ENCODE measurements at regions of chr21 and their contacts with region 1.

Region 1: GRCh38 chr21:42652527-42653230 is 742 bp upstream of the PDE9A start:
- DNase-seq: no peak
- H3K4me3 ChIP-seq: peak overlapping the region; percentile 68 to 91 (median 74)
- H3K27ac ChIP-seq: peak overlapping the region; percentile 78 to 86 (median 84)
- H3K4me1 ChIP-seq: peaks cover 29 to 58% (median 55%) of the 10 kb centered on the region in 4 donors
- H3K27me3 ChIP-seq: peaks cover 0 to 4% (median 2%) of the 10 kb centered on the region in 4 donors
- CTCF ChIP-seq: peak; percentile 57 to 76 (median 70)
- EP300 ChIP-seq: no peak
- POLR2A ChIP-seq: no peak

Region 2: DNA sequence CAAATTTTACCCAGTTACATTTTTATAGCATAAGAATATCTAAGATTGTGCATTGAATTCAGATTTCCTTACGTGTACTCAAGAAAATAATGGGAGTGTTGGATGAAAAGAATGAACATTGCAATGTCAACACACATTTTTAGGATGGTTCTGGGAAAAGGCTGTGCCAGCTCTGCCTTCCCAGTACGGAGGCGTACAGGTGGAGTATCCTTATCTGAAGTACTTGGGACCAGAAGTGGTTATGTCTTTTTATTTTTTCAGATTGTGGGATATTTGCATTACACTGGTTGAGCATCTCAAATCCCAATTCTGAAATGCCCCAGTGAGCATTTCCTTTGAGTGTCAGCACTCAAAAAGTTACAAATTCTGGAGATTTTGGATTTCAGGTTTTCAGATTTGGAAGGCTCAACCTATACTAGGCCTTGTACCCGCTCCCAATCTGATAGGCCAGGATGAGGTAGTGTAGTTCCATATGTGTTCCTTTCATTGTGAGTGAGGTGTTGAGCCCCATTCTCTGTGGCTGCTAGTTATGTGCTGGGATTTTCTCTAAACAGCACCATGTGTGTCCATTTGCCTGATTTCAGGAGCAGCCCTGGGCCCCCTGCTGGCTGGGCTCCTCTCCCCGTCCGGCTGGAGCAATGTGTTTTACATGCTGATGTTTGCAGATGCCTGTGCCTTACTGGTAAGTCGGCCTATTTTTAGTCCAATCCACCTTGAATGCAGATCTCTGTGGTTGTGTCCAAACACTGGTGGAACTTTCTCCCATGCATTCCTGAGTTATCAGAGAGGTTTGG is 78.2 kb before region 1 on chr21:
- intact Hi-C with region 1: no loop called
- DNase-seq: no peak
- H3K4me3 ChIP-seq: no peak overlapping the region
- H3K27ac ChIP-seq: no peak overlapping the region
- H3K4me1 ChIP-seq: no peaks in the 10 kb centered on the region
- H3K27me3 ChIP-seq: no peaks in the 10 kb centered on the region
- CTCF ChIP-seq: no peak
- EP300 ChIP-seq: no peak
- POLR2A ChIP-seq: no peak

Region 3: GRCh38 chr21:42746593-42747275 is 94.1 kb after region 1 on chr21:
- intact Hi-C with region 1: loop called (anchors 5 kb)
- DNase-seq: no peak
- H3K4me3 ChIP-seq: no peak overlapping the region
- H3K27ac ChIP-seq: peak overlapping the region; percentile 85 to 87 (median 86)
- H3K4me1 ChIP-seq: peaks cover 18 to 73% (median 66%) of the 10 kb centered on the region in 4 donors
- H3K27me3 ChIP-seq: no peaks in the 10 kb centered on the region
- CTCF ChIP-seq: no peak
- EP300 ChIP-seq: no peak
- POLR2A ChIP-seq: no peak

Region 4: GRCh38 chr21:42766739-42767560 is 114.3 kb after region 1 on chr21:
- intact Hi-C with region 1: no loop called
- DNase-seq: no peak
- H3K4me3 ChIP-seq: no peak overlapping the region
- H3K27ac ChIP-seq: no peak overlapping the region
- H3K4me1 ChIP-seq: no peaks in the 10 kb centered on the region
- H3K27me3 ChIP-seq: no peaks in the 10 kb centered on the region
- CTCF ChIP-seq: no peak
- EP300 ChIP-seq: no peak
- POLR2A ChIP-seq: no peak